ENCODE measurements at regions of chr9 and their contacts with region 1.

Region 1: DNA sequence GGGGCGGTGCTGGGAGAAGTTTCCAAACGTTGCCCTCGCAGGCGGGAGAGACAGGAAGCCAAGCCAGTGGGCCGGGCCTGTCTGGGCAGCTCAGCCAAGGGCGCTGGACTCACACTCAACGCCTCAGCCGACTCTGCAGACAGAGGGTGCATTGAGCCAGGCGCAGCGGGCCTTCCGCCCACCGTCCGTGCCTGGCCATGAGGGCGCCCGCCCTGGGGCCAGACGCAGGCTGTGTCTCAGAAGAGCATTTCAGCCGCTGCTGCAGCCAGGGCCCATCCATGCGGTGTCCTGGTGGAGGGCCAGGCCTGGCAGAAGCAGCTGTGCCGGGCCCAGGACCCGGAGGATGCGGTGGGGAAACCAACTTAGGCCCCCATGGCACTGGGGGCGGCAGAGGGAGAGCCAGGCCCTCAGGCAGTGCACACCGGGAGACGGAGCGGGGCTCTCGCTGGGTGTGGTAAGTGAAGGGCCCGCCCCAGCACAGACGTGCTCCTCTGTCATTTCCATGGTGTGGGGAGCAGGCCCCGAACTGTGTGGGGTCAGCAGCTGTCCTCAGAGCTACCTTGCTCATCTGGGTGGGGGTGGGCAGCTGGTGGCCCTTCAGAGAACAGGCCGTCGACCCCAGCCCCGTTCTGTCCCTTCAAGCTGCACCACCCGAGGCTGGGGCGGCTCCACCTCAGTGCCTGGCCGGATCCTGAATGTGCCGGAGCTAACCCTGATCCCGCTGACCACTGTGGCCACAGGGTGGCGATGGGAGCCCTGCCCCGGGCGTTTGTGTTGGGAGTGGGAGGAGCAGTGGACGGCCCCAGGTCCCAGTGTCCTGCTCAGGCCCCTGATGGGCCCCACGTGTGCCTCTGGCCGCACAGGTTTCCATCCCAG is 18.0 kb downstream of the DNLZ start:
- DNase-seq: peak; percentile 79 to 86 (median 80)
- ATAC-seq: peak; percentile 88
- H3K4me3 ChIP-seq: no peak overlapping the region
- H3K27ac ChIP-seq: peak overlapping the region; percentile 42; the same call in 1 of the 3 replicates
- H3K4me1 ChIP-seq: peaks cover 19 to 97% of the 10 kb centered on the region in 2 experiments
- H3K27me3 ChIP-seq: no peaks in the 10 kb centered on the region
- CTCF ChIP-seq: peak; percentile 77 to 79 (median 79)
- EP300 ChIP-seq: no peak
- POLR2A ChIP-seq: no peak
- RAD21 ChIP-seq: peak; percentile 58 to 72

Region 2: DNA sequence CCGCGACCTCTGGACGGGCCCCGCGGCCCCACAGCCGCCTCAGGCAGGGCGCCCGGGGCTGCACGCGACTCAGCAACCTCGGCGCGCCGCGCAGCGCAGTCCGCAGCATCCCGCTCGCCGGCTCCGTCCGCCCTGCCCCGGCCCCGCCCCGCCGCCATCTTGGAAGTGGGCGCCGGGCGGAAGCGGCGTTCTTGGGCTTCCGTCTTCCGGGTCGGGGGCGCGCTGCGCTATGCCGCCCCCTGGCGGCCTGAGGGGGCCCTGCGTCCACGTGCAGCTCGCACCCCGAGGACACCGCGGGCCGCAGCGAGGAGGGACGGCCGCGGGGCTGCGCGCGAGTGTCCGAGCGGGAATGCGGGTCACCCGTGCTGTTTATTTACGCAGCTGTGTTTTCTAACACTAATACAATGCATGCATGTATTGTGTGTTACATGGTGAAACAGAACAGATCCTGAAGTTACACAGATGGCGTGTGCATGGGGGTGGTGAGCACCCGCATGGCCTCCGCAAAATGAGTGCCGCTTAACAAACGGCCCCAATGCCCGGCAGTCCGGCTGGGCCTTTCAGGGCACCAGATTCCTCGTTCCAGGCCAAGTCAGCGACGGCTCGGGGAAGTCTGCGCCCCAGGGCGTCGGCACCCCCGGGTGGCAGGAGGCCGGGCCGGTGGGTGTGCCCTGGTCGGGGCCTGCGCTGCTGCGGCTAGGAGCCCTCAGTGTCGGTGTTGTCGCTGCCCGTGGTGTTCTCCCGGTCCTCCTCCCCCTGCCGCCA is 18.3 kb after region 1 on chr9 and contains the start of gene DNLZ:
- CTCF ChIA-PET with region 1: interaction called, 4 read pairs
- POLR2A ChIA-PET with region 1: interaction called, 11 read pairs
- in situ Hi-C with region 1: no loop called
- intact Hi-C with region 1: no loop called
- DNase-seq: peak; percentile 87 to 93 (median 90)
- ATAC-seq: peak; percentile 75
- H3K4me3 ChIP-seq: peak within 1 kb of the TSS; percentile 99
- H3K27ac ChIP-seq: peak within 1 kb of the TSS; percentile 97
- H3K4me1 ChIP-seq: peaks cover 11 to 93% of the 10 kb centered on the region in 2 experiments
- H3K27me3 ChIP-seq: no peaks in the 10 kb centered on the region
- CTCF ChIP-seq: peak; percentile 84 to 94 (median 93)
- EP300 ChIP-seq: no peak
- POLR2A ChIP-seq: peak; percentile 44
- RAD21 ChIP-seq: peak; percentile 50 to 54
- polyA plus RNA-seq, gene DNLZ: 0.17 to 0.36 TPM

Region 3: GRCh38 chr9:136551401-136552116 is 206.0 kb after region 1 on chr9:
- CTCF ChIA-PET with region 1: no interaction called
- POLR2A ChIA-PET with region 1: no interaction called
- in situ Hi-C with region 1: no loop called
- intact Hi-C with region 1: no loop called
- DNase-seq: peak; percentile 55 to 78 (median 70)
- ATAC-seq: no peak
- H3K4me3 ChIP-seq: no peak overlapping the region
- H3K27ac ChIP-seq: no peak overlapping the region
- H3K4me1 ChIP-seq: peaks cover 29 to 76% of the 10 kb centered on the region in 2 experiments
- H3K27me3 ChIP-seq: peaks cover 0 to 5% of the 10 kb centered on the region in 2 experiments; a peak in 1 of 5 replicates
- CTCF ChIP-seq: no peak
- EP300 ChIP-seq: no peak
- POLR2A ChIP-seq: no peak
- RAD21 ChIP-seq: no peak

Measured in K562 (cell line).